ENCODE measurements at regions of chr17 and their contacts with region 1.

Region 1: GRCh38 chr17:63595132-63595531 is 5.6 kb upstream of the TACO1 start:
- H3K4me3 ChIP-seq: no peak overlapping the region
- H3K27ac ChIP-seq: no peak overlapping the region
- H3K4me1 ChIP-seq: no peaks in the 10 kb centered on the region
- CTCF ChIP-seq: no peak

Region 2: DNA sequence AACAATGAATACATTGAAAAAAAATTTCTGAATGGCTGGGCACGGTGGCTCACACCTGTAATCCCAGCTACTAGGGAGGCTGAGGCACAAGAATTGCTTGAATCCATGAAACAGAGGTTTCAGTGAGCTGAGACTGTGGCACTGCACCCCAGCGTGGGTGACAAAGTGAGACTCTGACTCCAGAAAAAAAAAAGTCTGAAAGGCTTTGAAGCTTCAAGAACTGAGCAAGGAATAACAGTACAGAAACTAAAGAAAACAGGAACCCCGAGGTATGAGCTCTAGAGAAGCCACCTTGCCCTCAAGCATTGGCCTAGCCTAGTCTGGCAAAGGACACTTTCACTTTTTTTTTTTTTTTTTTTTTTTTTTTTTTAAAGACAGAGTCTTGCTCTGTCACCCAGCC is 622.9 kb after region 1 on chr17:
- CTCF ChIA-PET with region 1: no interaction called
- POLR2A ChIA-PET with region 1: interaction called, 10 read pairs
- H3K4me3 ChIP-seq: no peak overlapping the region
- H3K27ac ChIP-seq: no peak overlapping the region
- H3K4me1 ChIP-seq: peaks cover 28% of the 10 kb centered on the region
- CTCF ChIP-seq: no peak